Sigmoid colon (tissue), 7 donors: ENCODE measurements at regions of chr3 and their contacts with region 1.

Region 1: GRCh38 chr3:128879125-128879969 is at the start of gene ACAD9:
- DNase-seq: peak; percentile 99
- H3K4me3 ChIP-seq: peak within 1 kb of the TSS; percentile 62 to 81 (median 68)
- H3K27ac ChIP-seq: peak within 1 kb of the TSS; percentile 94 to 97 (median 96)
- H3K4me1 ChIP-seq: peaks cover 0 to 37% (median 29%) of the 10 kb centered on the region in 4 donors
- H3K27me3 ChIP-seq: no peaks in the 10 kb centered on the region
- CTCF ChIP-seq: no peak
- EP300 ChIP-seq: peak in 1 of 4 donors; percentile 86
- POLR2A ChIP-seq: peak; percentile 90 to 97
- total RNA-seq, gene ACAD9: 30.3 to 40.5 (median 34.4) TPM

Region 2: DNA sequence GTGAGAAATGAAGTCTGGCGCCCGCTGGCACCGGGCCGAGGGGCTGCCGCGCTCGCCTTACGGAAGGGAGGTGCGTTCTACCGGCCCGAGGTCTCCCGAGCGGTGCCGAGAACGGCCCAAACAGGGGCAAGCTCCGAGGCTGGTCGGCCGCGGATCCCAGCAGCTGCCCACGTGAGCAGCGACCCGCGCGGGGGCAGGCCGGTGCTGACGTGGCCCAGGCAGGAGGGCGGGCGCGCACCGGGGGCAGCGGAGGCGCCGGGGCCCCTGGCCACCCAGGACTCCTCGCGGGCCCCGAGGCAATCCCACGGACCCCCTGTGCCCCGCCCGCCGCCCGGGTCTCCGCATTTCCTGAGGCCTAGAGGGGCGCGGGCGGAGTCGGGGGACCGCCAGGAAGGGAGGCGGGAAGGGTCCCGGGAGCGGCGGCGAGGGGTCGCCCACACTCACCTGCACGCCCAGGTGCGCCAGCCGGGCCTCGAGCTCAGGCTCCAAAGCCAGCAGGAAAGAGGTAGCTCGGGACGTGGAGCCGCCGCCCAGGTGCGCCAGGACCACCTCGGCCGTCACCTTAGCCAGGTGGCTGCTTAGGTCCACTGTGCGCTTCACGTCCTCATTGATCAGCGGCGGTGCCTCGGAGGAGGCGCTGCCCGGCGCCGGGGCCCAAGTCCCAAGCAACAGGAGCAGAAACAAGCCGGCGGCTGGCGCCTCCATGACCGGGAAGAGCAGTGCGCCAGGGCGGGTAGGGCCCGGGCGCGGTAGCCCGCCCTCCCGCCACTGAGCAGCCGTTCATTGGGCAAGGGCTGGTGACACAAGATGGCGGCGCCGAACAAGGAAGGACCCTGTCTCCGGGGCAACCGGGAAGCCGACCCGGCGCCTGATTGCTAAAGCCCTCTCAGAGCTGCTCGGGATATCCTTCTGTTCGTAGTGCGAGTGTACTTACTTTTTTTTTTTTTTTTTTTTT is 229.0 kb before region 1 on chr3 and contains the start of gene RPN1:
- intact Hi-C with region 1: loop called (anchors 1 kb)
- DNase-seq: peak; percentile 99
- H3K4me3 ChIP-seq: peak within 1 kb of the TSS; percentile 94 to 100 (median 97)
- H3K27ac ChIP-seq: peak within 1 kb of the TSS; percentile 96 to 100 (median 100)
- H3K4me1 ChIP-seq: peaks cover 0 to 23% (median 17%) of the 10 kb centered on the region in 4 donors
- H3K27me3 ChIP-seq: no peaks in the 10 kb centered on the region
- CTCF ChIP-seq: no peak
- EP300 ChIP-seq: no peak
- POLR2A ChIP-seq: peak; percentile 69 to 72
- total RNA-seq, gene RPN1: 115 to 158 (median 143) TPM